Prostate gland (tissue), 2 donors: ENCODE measurements at regions of chr20 and their contacts with region 1.

Region 1: DNA sequence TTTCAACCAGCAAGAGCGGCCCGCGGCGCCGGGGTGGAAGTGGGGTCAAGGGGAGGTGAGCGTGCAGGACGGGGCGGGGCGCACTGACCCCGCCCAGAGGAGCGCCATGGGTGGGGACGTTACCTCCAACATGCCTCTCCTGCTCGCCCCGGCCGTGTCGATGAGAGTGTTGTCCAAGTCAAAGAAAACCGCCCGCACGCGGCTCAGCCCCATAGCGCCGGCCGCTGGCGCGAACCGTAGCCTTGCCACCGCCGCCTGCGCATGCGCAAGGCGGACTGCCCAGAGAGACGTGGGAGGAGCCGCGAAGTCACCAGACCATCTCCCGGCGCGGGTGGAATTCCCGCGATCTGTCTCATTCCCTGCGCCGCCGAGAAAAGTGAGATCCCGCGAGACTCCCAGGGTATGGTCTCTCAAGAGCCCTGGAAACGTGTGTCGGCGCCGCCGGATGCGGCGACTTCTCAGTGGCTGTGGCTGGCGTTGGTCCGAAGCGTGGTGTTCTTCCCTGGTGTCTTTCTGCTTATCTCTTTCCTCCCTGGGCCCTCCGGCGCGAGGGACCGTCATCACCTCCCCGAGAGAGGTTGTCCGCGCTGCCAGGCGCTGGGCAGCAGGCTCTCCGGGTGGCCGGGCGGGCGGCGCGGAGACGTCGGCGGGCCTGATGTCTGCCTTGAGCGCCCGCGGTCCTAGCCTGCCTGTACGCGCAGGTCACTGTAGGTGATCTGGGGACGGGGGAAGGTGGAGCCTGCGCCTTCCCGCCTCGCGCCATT is at the start of gene NANP:
- DNase-seq: peak; percentile 95
- H3K4me3 ChIP-seq: peak within 1 kb of the TSS; percentile 62 to 86
- H3K27ac ChIP-seq: peak within 1 kb of the TSS; percentile 84 to 94
- H3K4me1 ChIP-seq: no peaks in the 10 kb centered on the region
- H3K27me3 ChIP-seq: no peaks in the 10 kb centered on the region
- CTCF ChIP-seq: no peak
- POLR2A ChIP-seq: peak; percentile 70
- total RNA-seq, gene NANP: 4.0 to 5.3 TPM

Region 2: GRCh38 chr20:25539742-25540672 is 83.9 kb before region 1 on chr20:
- intact Hi-C with region 1: loop called (anchors 5 kb)
- DNase-seq: no peak
- H3K4me3 ChIP-seq: peak overlapping the region; percentile 21 to 25
- H3K27ac ChIP-seq: peak overlapping the region; percentile 61 to 62
- H3K4me1 ChIP-seq: no peaks in the 10 kb centered on the region
- H3K27me3 ChIP-seq: no peaks in the 10 kb centered on the region
- CTCF ChIP-seq: peak; percentile 9 to 57 (median 48)
- POLR2A ChIP-seq: no peak

Region 3: GRCh38 chr20:25654487-25654886 is 30.6 kb after region 1 on chr20:
- intact Hi-C with region 1: no loop called
- DNase-seq: no peak
- H3K4me3 ChIP-seq: no peak overlapping the region
- H3K27ac ChIP-seq: no peak overlapping the region
- H3K4me1 ChIP-seq: no peaks in the 10 kb centered on the region
- H3K27me3 ChIP-seq: no peaks in the 10 kb centered on the region
- CTCF ChIP-seq: no peak
- POLR2A ChIP-seq: no peak